Psoas muscle (tissue), 8 donors: ENCODE measurements at regions of chr5 and their contacts with region 1.

Region 1: DNA sequence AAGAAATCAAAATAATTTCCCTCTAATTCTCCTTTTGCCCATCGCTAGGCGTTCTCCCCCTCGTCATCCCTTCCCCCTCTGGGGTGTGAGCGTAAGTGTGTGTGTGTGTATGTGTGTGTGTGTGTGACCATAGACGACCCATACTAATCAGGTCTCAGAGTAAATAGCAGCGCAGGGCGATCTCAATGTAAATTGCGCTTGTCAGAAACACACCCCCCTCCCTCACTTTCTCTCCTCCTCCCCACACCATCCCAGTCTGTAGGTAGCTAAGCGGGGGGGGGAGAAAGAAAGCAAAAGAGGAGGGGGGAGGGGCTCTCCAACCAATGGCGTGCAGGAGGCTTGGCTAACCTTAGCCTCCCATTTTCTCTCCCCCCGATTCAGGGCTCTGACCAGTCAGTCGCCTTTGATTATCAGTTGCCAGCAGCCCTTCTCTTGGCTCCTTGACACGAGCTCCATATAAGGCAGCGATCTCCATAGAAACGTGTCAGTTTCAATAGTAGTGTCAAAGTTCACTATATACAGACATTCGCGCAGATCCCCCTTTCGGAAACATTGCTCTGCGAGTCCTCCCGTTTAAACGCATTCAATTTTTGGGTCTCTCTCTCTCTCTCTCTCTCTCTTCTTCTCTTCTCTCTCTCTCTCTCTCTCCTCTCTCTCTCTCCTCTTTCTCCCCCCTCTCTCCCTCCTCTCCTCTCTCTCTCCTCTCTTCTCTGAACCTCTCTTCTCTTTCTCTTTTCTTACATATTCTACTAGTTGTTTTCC is at the start of gene NR2F1:
- DNase-seq: peak; percentile 55 to 67
- ATAC-seq: peak; percentile 23 to 63 (median 44)
- H3K4me3 ChIP-seq: peak within 1 kb of the TSS; percentile 71
- H3K27ac ChIP-seq: peak within 1 kb of the TSS; percentile 41
- H3K4me1 ChIP-seq: peaks cover 7% of the 10 kb centered on the region
- H3K27me3 ChIP-seq: peaks cover 0 to 36% (median 0%) of the 10 kb centered on the region in 3 donors
- CTCF ChIP-seq: no peak
- total RNA-seq, gene NR2F1: 0.39 to 1.4 (median 1.2) TPM

Region 2: GRCh38 chr5:93620487-93621326 is 37.8 kb after region 1 on chr5:
- intact Hi-C with region 1: loop called in 1 of 2 experiments (anchors 5 kb)
- DNase-seq: peak; percentile 62 to 81
- ATAC-seq: peak; percentile 88 to 93 (median 91)
- H3K4me3 ChIP-seq: peak overlapping the region; percentile 83
- H3K27ac ChIP-seq: peak overlapping the region; percentile 80
- H3K4me1 ChIP-seq: peaks cover 11% of the 10 kb centered on the region
- H3K27me3 ChIP-seq: no peaks in the 10 kb centered on the region
- CTCF ChIP-seq: no peak

Region 3: GRCh38 chr5:93649234-93649900 is 66.5 kb after region 1 on chr5:
- intact Hi-C with region 1: no loop called
- DNase-seq: no peak
- ATAC-seq: no peak
- H3K4me3 ChIP-seq: no peak overlapping the region
- H3K27ac ChIP-seq: no peak overlapping the region
- H3K4me1 ChIP-seq: no peaks in the 10 kb centered on the region
- H3K27me3 ChIP-seq: no peaks in the 10 kb centered on the region
- CTCF ChIP-seq: no peak

Region 4: DNA sequence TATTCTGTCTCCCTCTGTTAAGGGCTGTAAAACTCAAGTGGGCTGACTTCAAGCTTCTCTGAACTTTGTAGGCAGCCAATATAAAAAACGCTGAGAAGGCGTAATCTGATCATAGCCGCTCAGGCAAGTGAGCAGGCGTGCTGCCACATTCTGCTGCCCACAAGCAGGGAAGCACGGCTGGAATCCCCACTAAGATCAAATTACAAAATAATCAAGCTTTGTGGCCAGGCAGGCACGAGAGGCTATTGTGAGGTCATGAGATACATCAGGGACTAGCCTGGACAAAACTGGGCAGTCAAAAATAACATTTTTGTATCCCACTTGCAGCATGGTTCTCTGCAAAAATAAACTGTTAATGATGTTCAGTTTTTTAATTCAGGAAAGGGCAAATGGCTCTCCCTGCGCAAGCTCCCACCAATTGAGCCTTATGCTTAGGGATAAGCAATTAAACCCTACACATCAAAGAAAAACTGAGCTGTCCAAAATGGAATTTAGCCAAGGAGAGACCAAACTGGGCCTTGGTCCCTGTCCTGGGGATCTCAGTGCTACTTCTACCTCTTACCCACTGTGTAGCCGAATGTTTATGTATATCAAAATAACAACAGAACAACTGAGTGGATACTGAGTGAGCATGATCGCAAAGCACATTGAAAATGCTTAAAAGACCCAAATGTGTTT is 94.6 kb after region 1 on chr5:
- intact Hi-C with region 1: no loop called
- DNase-seq: peak; percentile 20 to 64
- ATAC-seq: peak; percentile 73 to 89 (median 84)
- H3K4me3 ChIP-seq: no peak overlapping the region
- H3K27ac ChIP-seq: no peak overlapping the region
- H3K4me1 ChIP-seq: peaks cover 13% of the 10 kb centered on the region
- H3K27me3 ChIP-seq: no peaks in the 10 kb centered on the region
- CTCF ChIP-seq: no peak

Region 5: GRCh38 chr5:93746406-93747056 is 163.7 kb after region 1 on chr5:
- intact Hi-C with region 1: no loop called
- DNase-seq: no peak
- ATAC-seq: no peak
- H3K4me3 ChIP-seq: no peak overlapping the region
- H3K27ac ChIP-seq: no peak overlapping the region
- H3K4me1 ChIP-seq: no peaks in the 10 kb centered on the region
- H3K27me3 ChIP-seq: no peaks in the 10 kb centered on the region
- CTCF ChIP-seq: no peak

Region 6: DNA sequence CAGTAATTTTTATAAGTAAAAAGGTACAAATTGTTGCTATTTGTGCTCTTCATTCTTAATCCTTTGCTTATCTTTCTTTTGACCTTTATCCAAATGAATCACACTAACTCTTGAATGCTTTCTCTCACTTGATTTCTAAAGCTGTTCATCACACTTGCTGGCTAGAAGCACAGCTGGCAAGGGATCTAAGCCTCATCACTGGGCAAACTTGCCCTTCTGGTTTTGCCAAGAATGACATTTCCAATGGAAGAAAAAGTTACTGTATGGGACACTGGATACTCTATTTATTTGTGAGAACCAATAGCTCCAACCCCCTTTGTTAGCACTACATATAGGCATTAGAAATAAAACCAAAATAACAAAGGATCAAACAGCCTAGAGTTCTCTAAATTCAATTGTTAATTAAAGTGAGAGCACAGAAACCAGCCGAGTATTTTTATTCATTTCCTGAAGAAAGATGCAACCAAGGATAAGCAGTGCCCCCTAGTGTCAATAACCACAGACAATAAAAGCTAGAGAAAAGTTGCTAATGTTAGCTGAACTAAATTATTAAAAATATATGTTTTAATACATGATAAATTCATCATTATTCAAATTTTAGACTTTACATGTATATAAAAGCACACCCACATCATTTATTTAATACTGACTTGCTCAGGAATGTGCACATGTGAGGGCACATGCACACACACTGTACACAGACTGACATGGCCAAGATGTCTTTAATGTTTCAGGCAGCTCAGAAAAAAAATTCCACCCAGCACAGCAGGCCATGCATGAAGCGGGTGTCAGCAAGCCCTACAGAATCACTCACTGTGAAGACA is 218.3 kb after region 1 on chr5:
- intact Hi-C with region 1: loop called (anchors 2 kb)
- DNase-seq: peak in 1 of 2 donors; percentile 13
- ATAC-seq: peak in 3 of 4 donors; percentile 46 to 76 (median 48)
- H3K4me3 ChIP-seq: no peak overlapping the region
- H3K27ac ChIP-seq: no peak overlapping the region
- H3K4me1 ChIP-seq: peaks cover 4% of the 10 kb centered on the region
- H3K27me3 ChIP-seq: no peaks in the 10 kb centered on the region
- CTCF ChIP-seq: peak; percentile 75

Region 7: DNA sequence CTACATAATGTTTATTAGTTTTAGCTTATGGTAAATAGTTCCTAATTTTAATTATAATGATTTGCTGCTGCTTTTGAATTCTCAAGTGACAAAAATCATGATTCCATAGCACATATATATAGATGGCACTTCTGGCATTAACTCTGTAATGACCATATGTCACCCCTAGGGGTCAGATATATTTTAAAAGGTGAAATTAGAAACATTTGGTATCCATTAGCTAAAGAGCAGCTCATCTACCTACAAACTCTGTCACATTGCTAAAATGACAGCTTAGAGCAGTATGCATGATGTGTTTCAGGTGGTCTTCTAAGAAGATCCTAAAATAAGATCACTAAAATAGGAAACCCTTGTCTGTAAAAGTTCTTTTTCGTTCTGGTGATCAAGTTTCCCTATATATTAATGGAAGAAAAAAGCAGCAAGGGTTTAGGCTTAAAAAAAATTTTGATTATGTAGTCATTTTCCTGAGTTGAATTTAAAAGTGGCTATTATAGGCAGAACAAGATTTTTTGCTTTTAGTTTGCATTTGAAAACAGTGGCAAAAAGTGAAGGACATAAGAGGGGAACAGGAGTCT is 316.3 kb after region 1 on chr5:
- intact Hi-C with region 1: loop called in 1 of 2 experiments (anchors 10 kb)
- DNase-seq: no peak
- ATAC-seq: no peak
- H3K4me3 ChIP-seq: no peak overlapping the region
- H3K27ac ChIP-seq: no peak overlapping the region
- H3K4me1 ChIP-seq: no peaks in the 10 kb centered on the region
- H3K27me3 ChIP-seq: no peaks in the 10 kb centered on the region
- CTCF ChIP-seq: peak; percentile 21

Region 8: GRCh38 chr5:93915142-93915553 is 332.3 kb after region 1 on chr5:
- intact Hi-C with region 1: loop called (anchors 5 to 10 kb)
- DNase-seq: no peak
- ATAC-seq: peak in 1 of 4 donors; percentile 56
- H3K4me3 ChIP-seq: no peak overlapping the region
- H3K27ac ChIP-seq: no peak overlapping the region
- H3K4me1 ChIP-seq: no peaks in the 10 kb centered on the region
- H3K27me3 ChIP-seq: no peaks in the 10 kb centered on the region
- CTCF ChIP-seq: peak; percentile 61